ENCODE measurements at regions of chr1 and their contacts with region 1.

Region 1: GRCh38 chr1:47432071-47433036 is 5.5 kb upstream of the FOXD2 start:
- DNase-seq: peak; percentile 89
- H3K4me3 Mint-ChIP-seq: peak overlapping the region; percentile 48
- H3K27ac Mint-ChIP-seq: peak overlapping the region; percentile 14
- H3K4me1 Mint-ChIP-seq: peaks cover 37% of the 10 kb centered on the region
- H3K27me3 Mint-ChIP-seq: no peaks in the 10 kb centered on the region
- CTCF ChIP-seq: peak; percentile 87

Region 2: DNA sequence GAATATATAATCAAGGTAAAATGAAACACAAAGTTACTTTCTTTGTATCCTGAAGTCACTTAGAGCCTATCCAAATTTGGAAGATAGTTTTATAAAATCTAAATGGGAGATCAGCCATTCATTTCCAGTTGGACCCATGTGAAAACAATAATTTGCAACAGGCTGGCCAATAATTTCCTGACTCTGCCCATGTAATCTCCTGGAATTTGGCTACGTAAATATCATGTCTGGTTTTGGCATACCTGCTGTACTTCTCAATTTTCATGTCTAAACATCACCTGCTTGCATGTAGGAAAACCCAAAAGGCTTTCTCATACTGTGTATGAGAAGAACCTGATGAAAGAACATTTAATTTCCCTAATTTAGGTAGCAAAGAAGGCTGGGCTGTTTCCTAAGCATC is 373.0 kb before region 1 on chr1:
- CTCF ChIA-PET with region 1: no interaction called
- POLR2A ChIA-PET with region 1: no interaction called
- intact Hi-C with region 1: no loop called
- DNase-seq: no peak
- H3K4me3 Mint-ChIP-seq: no peak overlapping the region
- H3K27ac Mint-ChIP-seq: no peak overlapping the region
- H3K4me1 Mint-ChIP-seq: no peaks in the 10 kb centered on the region
- H3K27me3 Mint-ChIP-seq: no peaks in the 10 kb centered on the region
- CTCF ChIP-seq: no peak

Region 3: DNA sequence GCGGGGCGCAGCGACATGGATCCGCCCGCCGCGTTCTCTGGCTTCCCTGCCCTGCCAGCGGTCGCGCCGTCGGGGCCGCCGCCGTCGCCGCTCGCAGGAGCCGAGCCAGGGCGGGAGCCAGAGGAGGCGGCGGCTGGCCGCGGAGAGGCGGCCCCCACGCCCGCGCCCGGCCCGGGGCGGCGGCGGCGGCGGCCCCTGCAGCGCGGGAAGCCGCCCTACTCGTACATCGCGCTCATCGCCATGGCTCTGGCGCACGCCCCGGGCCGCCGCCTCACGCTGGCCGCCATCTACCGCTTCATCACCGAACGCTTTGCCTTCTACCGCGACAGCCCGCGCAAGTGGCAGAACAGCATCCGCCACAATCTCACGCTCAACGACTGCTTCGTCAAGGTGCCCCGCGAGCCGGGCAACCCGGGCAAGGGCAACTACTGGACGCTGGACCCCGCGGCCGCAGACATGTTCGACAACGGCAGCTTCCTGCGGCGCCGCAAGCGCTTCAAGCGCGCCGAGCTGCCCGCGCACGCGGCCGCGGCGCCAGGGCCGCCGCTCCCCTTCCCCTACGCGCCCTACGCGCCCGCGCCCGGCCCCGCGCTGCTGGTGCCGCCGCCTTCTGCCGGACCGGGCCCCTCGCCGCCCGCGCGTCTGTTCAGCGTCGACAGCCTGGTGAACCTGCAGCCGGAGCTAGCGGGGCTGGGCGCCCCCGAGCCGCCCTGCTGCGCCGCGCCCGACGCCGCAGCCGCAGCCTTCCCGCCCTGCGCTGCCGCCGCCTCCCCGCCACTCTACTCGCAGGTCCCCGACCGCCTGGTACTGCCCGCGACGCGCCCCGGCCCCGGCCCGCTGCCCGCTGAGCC is 15.8 kb before region 1 on chr1:
- CTCF ChIA-PET with region 1: interaction called, 14 read pairs
- POLR2A ChIA-PET with region 1: interaction called, 3 read pairs
- intact Hi-C with region 1: no loop called
- DNase-seq: no peak
- H3K4me3 Mint-ChIP-seq: no peak overlapping the region
- H3K27ac Mint-ChIP-seq: no peak overlapping the region
- H3K4me1 Mint-ChIP-seq: no peaks in the 10 kb centered on the region
- H3K27me3 Mint-ChIP-seq: no peaks in the 10 kb centered on the region
- CTCF ChIP-seq: no peak

Measured in MCF 10A (cell line).